Activated naive CD4-positive, alpha-beta T cell treated with anti-CD3 and anti-CD28 coated beads, Interleukin-2, amount 10 ng/mL, durations not matched to agents 7 days and 5 days (primary cell): ENCODE measurements at regions of chr6 and their contacts with region 1.

Region 1: DNA sequence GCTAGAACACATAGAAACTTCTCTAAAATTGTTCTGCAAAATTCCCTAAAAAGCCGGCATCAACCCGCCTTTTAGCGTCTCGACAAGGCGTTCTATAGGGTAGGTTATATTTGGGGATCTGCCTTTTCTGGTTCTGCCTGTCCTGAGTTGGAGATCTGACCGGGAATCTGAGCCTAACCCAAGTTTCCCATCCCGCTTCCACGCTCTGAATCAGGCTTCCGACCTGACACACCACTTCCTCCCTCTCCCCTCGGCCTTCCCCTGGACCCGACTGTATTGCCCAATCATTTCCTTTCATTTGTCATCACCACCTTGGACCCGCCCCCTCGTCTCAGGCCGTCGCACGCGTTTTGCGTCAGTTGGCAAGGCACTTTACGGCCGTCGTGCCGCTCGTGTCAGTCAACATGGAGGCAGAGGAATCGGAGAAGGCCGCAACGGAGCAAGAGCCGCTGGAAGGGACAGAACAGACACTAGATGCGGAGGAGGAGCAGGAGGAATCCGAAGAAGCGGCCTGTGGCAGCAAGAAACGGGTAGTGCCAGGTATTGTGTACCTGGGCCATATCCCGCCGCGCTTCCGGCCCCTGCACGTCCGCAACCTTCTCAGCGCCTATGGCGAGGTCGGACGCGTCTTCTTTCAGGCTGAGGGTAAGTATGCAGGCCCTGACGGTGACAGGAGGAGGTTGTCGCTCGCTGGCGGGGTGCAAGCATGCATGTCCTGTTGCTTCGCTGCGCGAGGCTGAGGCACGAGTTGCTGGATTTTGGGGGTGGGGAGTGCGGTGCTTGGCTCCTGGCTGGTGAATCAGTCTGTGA is at the start of gene ABT1:
- DNase-seq: peak; percentile 98
- H3K4me3 Mint-ChIP-seq: no peak within 1 kb of the TSS
- H3K27ac Mint-ChIP-seq: no peak within 1 kb of the TSS
- H3K4me1 Mint-ChIP-seq: peaks cover 43% of the 10 kb centered on the region
- H3K27me3 Mint-ChIP-seq: peaks cover 31% of the 10 kb centered on the region

Region 2: DNA sequence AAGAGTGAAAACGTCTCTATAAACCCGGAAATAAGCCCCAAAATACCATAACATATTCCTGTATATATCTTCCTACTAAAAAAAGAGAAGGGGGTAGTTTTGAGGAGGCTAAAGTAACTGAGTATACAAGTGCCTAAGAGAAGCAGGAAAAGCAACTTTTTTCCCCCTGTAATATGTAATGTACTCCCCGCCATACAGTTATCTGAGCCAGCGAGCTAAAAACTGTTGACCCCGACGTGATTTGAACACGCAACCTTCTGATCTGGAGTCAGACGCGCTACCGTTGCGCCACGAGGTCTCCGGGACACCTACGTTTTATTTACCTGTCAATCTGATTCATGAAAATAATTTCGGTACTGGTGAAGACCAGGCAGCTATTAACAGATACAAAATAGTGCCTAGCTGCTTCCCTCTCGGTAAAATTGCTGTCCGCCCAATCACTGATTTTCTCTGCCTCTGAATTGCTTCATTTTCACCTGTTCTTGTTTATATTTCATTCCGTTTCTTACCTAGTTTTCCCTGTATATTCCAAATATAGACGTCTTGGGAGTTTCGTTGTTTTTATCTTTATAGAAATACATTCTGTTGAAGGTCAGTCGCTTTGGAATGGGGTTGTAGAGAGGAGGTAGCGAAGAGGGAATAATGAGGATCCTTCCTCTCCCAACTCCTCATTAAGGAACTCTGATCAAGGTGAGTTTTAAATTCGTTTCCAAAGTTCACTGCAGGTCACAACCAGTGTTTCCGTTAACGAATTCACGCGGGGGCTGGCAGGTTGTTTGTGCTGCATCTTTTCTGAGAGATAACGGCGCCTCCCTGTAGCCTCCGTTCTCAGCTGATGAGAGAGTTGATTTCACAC is 265.3 kb before region 1 on chr6:
- CTCF ChIA-PET with region 1: interaction called, 11 read pairs
- DNase-seq: peak; percentile 59
- H3K4me3 Mint-ChIP-seq: peak overlapping the region; percentile 64
- H3K27ac Mint-ChIP-seq: peak overlapping the region; percentile 33
- H3K4me1 Mint-ChIP-seq: peaks cover 60% of the 10 kb centered on the region
- H3K27me3 Mint-ChIP-seq: peaks cover 63% of the 10 kb centered on the region